Esophagus squamous epithelium (tissue), 5 donors: ENCODE measurements at regions of chr6 and their contacts with region 1.

Region 1: GRCh38 chr6:32984605-32985389 is 16.4 kb downstream of the BRD2 start:
- DNase-seq: peak; percentile 52
- H3K4me3 ChIP-seq: no peak overlapping the region
- H3K27ac ChIP-seq: peak overlapping the region in 3 of 4 donors; percentile 6 to 32 (median 14)
- H3K4me1 ChIP-seq: peaks cover 0 to 46% (median 5%) of the 10 kb centered on the region in 3 donors
- H3K27me3 ChIP-seq: no peaks in the 10 kb centered on the region
- CTCF ChIP-seq: peak; percentile 82 to 94 (median 88)
- POLR2A ChIP-seq: no peak

Region 2: GRCh38 chr6:32885698-32886286 is 99.0 kb before region 1 on chr6:
- intact Hi-C with region 1: loop called (anchors 5 kb)
- DNase-seq: no peak
- H3K4me3 ChIP-seq: no peak overlapping the region
- H3K27ac ChIP-seq: peak overlapping the region in 1 of 4 donors; percentile 47
- H3K4me1 ChIP-seq: peaks cover 0 to 19% (median 10%) of the 10 kb centered on the region in 3 donors
- H3K27me3 ChIP-seq: no peaks in the 10 kb centered on the region
- CTCF ChIP-seq: peak; percentile 52 to 74 (median 62)
- POLR2A ChIP-seq: no peak

Region 3: GRCh38 chr6:32940656-32941213 is 44.1 kb before region 1 on chr6 and contains the start of gene HLA-DMB:
- intact Hi-C with region 1: loop called (anchors 5 kb)
- DNase-seq: no peak
- H3K4me3 ChIP-seq: peak within 1 kb of the TSS; percentile 23 to 71 (median 43)
- H3K27ac ChIP-seq: peak within 1 kb of the TSS; percentile 55 to 90 (median 76)
- H3K4me1 ChIP-seq: peaks cover 0 to 27% (median 14%) of the 10 kb centered on the region in 3 donors
- H3K27me3 ChIP-seq: peaks cover 0 to 12% (median 0%) of the 10 kb centered on the region in 4 donors
- CTCF ChIP-seq: no peak
- POLR2A ChIP-seq: peak in 1 of 4 donors; percentile 67
- total RNA-seq, gene HLA-DMB: 3.4 to 24.8 (median 9.2) TPM

Region 4: GRCh38 chr6:33417903-33418689 is 433.3 kb after region 1 on chr6 and contains the start of gene CUTA:
- intact Hi-C with region 1: no loop called
- DNase-seq: peak; percentile 97
- H3K4me3 ChIP-seq: peak within 1 kb of the TSS; percentile 41 to 85 (median 72)
- H3K27ac ChIP-seq: peak within 1 kb of the TSS; percentile 89 to 99 (median 96)
- H3K4me1 ChIP-seq: peaks cover 35 to 74% (median 37%) of the 10 kb centered on the region in 3 donors
- H3K27me3 ChIP-seq: no peaks in the 10 kb centered on the region
- CTCF ChIP-seq: peak; percentile 21 to 53 (median 40)
- POLR2A ChIP-seq: peak in 3 of 4 donors; percentile 54 to 82 (median 74)
- total RNA-seq, gene CUTA: 46.0 to 93.1 (median 69.4) TPM